A549 (cell line): ENCODE measurements at regions of chr5 and their contacts with region 1.

Region 1: DNA sequence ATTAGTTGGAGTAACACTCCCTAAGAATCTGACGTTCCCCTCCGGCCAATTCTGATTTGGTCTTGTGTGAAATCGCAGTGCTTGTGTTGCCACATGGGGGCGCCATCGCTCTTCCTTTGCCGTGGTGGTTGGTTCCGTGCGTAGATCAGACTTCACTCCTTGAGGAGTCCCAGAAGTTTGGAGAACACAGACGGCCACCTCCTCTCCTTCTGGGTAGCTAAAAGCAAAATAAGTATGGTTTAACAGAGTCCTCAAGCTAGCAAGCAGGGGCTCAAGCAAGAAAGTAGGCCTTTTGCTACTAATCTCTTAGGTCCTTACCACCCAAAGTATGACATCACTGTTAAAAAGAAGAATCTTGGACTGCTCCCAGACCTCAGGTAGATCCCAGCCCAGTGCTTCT is 59.5 kb downstream of the HSPA4 start:
- DNase-seq: peak; percentile 83 to 87
- ATAC-seq: peak; percentile 78 to 90
- H3K4me3 ChIP-seq: no peak overlapping the region
- H3K27ac ChIP-seq: peak overlapping the region; percentile 35 to 61; a peak in 4 of 6 replicates
- H3K4me1 ChIP-seq: peaks cover 13% of the 10 kb centered on the region; the same call in 2 of the 3 replicates
- CTCF ChIP-seq: peak; percentile 98
- EP300 ChIP-seq: no peak
- POLR2A ChIP-seq: no peak
- RAD21 ChIP-seq: peak; percentile 100

Region 2: DNA sequence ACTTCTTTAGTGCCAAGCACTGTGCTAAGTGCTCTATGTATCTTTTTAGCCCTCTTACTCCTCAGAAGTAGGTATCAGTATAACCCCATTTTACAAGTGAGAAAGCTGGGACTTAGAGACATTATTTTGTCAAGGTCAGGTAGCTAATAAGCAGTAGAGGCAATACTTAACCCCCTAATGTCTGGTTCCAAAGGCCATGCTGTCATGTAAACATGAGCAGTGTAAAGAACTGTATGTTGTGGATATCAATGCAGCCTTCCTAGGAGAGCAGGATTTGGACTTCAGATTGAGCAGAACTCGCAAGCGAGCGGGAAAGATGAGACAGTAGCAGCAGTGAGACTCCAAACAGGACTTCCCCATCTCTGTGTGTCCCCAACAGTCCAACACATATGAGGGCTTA is 277.2 kb before region 1 on chr5:
- CTCF ChIA-PET with region 1: no interaction called
- POLR2A ChIA-PET with region 1: no interaction called
- DNase-seq: no peak
- ATAC-seq: no peak
- H3K4me3 ChIP-seq: no peak overlapping the region
- H3K27ac ChIP-seq: no peak overlapping the region
- H3K4me1 ChIP-seq: peaks cover 3% of the 10 kb centered on the region; the same call in 1 of the 3 replicates
- CTCF ChIP-seq: no peak
- EP300 ChIP-seq: no peak
- POLR2A ChIP-seq: no peak
- RAD21 ChIP-seq: no peak

Region 3: DNA sequence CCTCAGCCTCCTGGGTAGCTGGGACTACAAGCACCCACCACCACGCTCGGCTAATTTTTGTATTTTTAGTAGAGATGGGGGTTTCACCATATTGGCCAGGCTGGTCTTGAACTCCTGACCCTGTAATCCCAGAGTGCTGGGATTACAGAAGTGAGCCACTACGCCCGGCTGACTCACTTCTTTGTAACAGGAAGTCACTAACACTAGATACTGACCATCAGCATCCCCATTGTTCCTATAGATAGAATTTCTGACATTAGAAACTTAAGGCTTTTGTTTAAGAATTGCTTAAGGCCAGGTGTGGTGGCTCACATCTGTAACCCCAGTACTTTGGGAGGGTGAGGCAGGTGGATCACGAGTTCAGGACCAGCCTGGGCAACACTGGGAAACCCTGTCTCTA is 195.6 kb before region 1 on chr5:
- CTCF ChIA-PET with region 1: no interaction called
- POLR2A ChIA-PET with region 1: no interaction called
- DNase-seq: no peak
- ATAC-seq: peak in 1 of 2 experiments; percentile 17; a peak in 1 of 6 replicates
- H3K4me3 ChIP-seq: no peak overlapping the region
- H3K27ac ChIP-seq: no peak overlapping the region
- H3K4me1 ChIP-seq: no peaks in the 10 kb centered on the region
- CTCF ChIP-seq: no peak
- EP300 ChIP-seq: no peak
- POLR2A ChIP-seq: no peak
- RAD21 ChIP-seq: no peak

Region 4: GRCh38 chr5:133072021-133072420 is 39.3 kb before region 1 on chr5:
- CTCF ChIA-PET with region 1: no interaction called
- POLR2A ChIA-PET with region 1: no interaction called
- DNase-seq: no peak
- ATAC-seq: no peak
- H3K4me3 ChIP-seq: no peak overlapping the region
- H3K27ac ChIP-seq: no peak overlapping the region
- H3K4me1 ChIP-seq: peaks cover 8% of the 10 kb centered on the region; the same call in 2 of the 3 replicates
- CTCF ChIP-seq: no peak
- EP300 ChIP-seq: no peak
- POLR2A ChIP-seq: no peak
- RAD21 ChIP-seq: no peak

Region 5: DNA sequence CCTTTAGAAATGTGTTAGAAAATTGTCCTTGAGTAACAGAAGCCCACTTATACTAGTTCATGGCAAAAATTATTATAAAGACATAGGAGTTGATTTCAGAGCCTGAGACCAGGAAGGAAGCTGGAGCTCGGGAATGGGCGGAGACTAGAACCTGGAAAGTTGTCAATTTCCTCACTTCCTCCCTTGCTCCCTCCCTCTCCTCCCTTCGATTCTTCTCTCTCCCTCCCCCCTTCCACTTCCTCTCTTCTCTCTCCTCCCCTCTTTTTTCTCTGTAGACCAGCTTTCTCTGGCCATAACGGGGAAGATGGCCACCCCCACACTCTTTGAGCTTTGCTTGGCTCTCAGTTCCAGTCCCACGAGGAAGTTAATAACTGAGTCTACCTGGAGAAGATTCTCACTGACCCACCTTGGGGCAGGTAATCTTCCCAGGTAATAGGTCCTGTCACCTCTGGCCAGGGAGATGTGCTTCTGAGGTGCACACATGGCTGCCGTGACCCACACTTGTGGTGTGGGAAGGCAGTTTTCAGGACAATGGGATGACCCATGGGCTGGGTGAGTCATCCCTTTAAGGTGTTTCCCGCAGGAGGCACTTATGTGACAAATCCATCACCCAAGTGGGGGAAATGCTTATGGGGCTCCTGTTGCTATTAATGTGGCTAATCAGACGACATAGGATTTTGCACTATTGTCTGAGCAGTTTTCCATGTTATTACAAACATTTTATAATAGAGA is 19.3 kb after region 1 on chr5:
- CTCF ChIA-PET with region 1: interaction called, 37 read pairs
- POLR2A ChIA-PET with region 1: no interaction called
- DNase-seq: no peak
- ATAC-seq: no peak
- H3K4me3 ChIP-seq: no peak overlapping the region
- H3K27ac ChIP-seq: no peak overlapping the region
- H3K4me1 ChIP-seq: peaks cover 11% of the 10 kb centered on the region; the same call in 1 of the 3 replicates
- CTCF ChIP-seq: no peak
- EP300 ChIP-seq: no peak
- POLR2A ChIP-seq: no peak
- RAD21 ChIP-seq: no peak

Region 6: DNA sequence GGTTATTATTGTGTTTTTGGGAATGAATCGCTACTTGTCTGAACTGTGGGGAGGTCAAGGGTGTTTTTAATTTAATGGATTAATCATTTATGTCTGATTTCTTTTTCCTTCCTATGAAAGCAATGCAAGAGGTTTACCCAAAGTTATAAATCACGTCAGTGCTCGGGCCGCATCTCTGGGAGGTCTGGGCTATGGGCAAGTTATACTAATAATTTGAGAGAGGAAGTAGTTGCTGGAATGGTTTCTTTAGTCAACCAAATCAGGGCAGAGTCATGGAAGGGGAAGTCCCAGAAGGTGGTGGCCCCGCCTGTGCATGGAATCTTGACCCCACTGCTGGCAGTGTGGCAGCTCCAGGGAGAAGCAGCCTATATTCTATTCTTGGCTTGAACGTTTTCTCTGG is 120.7 kb after region 1 on chr5:
- CTCF ChIA-PET with region 1: interaction called, 13 read pairs
- POLR2A ChIA-PET with region 1: interaction called, 3 read pairs
- DNase-seq: no peak
- ATAC-seq: no peak
- H3K4me3 ChIP-seq: no peak overlapping the region
- H3K27ac ChIP-seq: peak overlapping the region in 1 of 2 experiments; percentile 48; a peak in 3 of 6 replicates
- H3K4me1 ChIP-seq: peaks cover 25% of the 10 kb centered on the region
- CTCF ChIP-seq: no peak
- EP300 ChIP-seq: no peak
- POLR2A ChIP-seq: no peak
- RAD21 ChIP-seq: no peak

Region 7: DNA sequence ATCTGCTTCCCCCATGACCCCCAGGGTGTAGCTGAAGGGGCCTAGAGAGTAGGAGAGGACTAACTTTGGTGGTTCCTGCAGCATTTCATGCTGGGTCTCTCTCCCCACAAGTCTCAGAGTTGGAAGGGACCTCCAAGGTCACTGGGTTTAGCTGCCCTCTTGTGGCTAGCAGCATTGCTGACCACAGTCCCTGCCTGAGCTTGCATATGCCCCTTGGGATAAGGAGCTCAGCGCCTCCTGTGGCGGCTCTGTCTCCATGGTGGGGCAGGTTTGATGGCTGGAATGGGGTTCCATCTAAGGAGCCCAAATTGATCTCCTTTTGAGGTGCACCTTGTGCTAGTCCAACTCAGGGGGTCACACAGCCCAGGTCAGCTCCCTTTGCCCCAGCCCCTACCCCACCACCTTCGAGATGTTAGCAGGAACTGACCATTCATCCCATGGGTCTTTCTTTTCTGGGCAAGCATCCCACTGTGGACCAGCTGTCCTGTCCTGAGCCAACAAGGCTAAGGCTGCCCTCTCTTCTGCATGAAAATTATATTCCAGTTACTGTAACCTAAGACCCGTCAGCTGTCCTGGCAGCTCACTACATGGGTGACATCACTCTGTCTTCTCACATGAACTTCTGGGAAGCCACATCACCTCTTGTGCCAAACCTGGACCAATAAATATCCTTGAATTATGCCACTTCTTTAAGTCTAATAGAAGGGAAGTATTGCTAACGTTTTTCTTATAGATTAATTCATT is 136.8 kb after region 1 on chr5:
- CTCF ChIA-PET with region 1: interaction called, 302 read pairs
- POLR2A ChIA-PET with region 1: interaction called, 6 read pairs
- DNase-seq: peak; percentile 73 to 90
- ATAC-seq: peak; percentile 62 to 85; a peak in 5 of 6 replicates
- H3K4me3 ChIP-seq: no peak overlapping the region
- H3K27ac ChIP-seq: peak overlapping the region; percentile 89 to 94
- H3K4me1 ChIP-seq: peaks cover 74% of the 10 kb centered on the region
- CTCF ChIP-seq: peak; percentile 91
- EP300 ChIP-seq: no peak
- POLR2A ChIP-seq: no peak
- RAD21 ChIP-seq: peak; percentile 93 to 95

Region 8: GRCh38 chr5:133278317-133278716 is 167.0 kb after region 1 on chr5:
- CTCF ChIA-PET with region 1: interaction called, 10 read pairs
- POLR2A ChIA-PET with region 1: no interaction called
- DNase-seq: no peak
- ATAC-seq: no peak
- H3K4me3 ChIP-seq: no peak overlapping the region
- H3K27ac ChIP-seq: no peak overlapping the region
- H3K4me1 ChIP-seq: peaks cover 5% of the 10 kb centered on the region; the same call in 1 of the 3 replicates
- CTCF ChIP-seq: no peak
- EP300 ChIP-seq: no peak
- POLR2A ChIP-seq: no peak
- RAD21 ChIP-seq: no peak

Region 9: DNA sequence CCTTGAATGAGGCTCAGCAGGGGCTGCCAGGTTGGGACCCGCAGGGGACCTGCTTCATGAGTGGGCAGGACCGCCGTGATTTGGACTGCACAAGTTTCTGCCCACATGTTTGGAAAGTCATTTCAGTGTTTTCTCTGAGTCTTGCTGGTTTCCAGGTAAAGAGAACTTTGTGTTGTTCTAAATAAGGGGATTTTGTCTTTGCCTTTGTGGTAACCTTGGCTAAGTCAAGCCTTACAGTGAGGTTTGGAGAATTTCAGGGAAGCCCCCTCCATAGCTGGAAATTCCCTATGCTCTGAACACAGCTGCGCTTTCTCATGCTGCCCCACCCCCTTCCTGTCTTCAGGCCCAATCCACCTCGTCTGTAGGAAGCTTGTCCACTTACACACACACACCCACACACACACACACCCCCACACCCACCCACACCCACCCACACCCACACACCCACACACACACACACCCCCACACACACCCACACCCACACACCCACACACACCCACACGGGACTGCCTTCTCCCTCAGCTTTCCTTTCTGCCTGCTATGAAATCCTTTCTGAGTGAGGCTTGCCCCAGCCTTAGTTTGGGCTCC is 210.6 kb after region 1 on chr5:
- CTCF ChIA-PET with region 1: interaction called, 23 read pairs
- POLR2A ChIA-PET with region 1: no interaction called
- DNase-seq: no peak
- ATAC-seq: no peak
- H3K4me3 ChIP-seq: no peak overlapping the region
- H3K27ac ChIP-seq: no peak overlapping the region
- H3K4me1 ChIP-seq: no peaks in the 10 kb centered on the region
- CTCF ChIP-seq: no peak
- EP300 ChIP-seq: no peak
- POLR2A ChIP-seq: no peak
- RAD21 ChIP-seq: no peak